HCT116 (cell line): ENCODE measurements at regions of chr17 and their contacts with region 1.

Region 1: DNA sequence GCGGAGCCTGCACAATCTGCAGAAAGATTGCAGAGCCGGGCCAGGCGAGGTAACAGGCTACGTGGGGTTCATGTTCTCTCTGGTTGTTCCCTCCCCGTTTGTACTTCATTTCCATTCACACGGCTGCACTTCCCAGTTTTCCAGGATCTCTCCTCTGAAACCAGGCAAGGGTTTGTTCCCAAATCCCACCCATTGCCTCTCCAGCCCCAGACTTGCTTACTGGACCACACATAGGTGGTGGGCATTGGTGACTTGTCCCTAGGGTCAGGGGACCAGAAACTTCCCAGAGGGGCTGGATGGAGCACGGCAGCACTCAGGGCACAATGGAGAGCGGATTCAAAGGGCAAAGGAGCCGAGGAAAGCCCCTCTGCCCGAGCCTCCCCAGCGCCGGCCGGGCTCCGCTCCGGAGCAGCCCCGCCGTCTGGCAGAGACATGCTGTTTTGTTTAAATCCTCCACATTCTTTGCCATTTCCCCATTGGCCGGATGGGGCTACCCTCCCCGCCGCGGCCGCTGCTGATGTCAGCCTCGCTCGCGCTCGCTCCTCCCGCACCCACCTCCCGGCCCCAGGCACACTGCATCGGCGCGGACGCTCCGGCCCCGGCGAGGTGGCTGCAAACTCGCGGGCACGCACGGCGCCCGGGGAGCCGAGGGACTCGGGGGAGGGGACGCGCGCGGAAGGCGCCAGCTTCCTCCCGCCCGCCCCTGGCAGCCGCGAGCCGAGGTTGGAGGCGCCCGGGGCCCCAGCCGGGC is at the start of gene PITPNC1:
- DNase-seq: peak; percentile 68
- ATAC-seq: peak; percentile 67
- H3K4me3 ChIP-seq: peak within 1 kb of the TSS; percentile 66 to 89
- H3K27ac ChIP-seq: peak within 1 kb of the TSS; percentile 73
- H3K4me1 ChIP-seq: peaks cover 26 to 49% of the 10 kb centered on the region in 2 experiments
- H3K27me3 ChIP-seq: no peaks in the 10 kb centered on the region
- CTCF ChIP-seq: no peak
- POLR2A ChIP-seq: peak; percentile 55
- RAD21 ChIP-seq: no peak
- total RNA-seq, gene PITPNC1: 41.9 TPM

Region 2: GRCh38 chr17:67116045-67116719 is 260.7 kb before region 1 on chr17:
- CTCF ChIA-PET with region 1: no interaction called
- POLR2A ChIA-PET with region 1: no interaction called
- RAD21 ChIA-PET with region 1: no interaction called
- intact Hi-C with region 1: no loop called
- DNase-seq: no peak
- ATAC-seq: no peak
- H3K4me3 ChIP-seq: no peak overlapping the region
- H3K27ac ChIP-seq: no peak overlapping the region
- H3K4me1 ChIP-seq: no peaks in the 10 kb centered on the region
- H3K27me3 ChIP-seq: no peaks in the 10 kb centered on the region
- CTCF ChIP-seq: peak; percentile 18 to 53 (median 19); a peak in 3 of 6 replicates
- POLR2A ChIP-seq: no peak
- RAD21 ChIP-seq: no peak

Region 3: GRCh38 chr17:67359960-67360773 is 16.7 kb before region 1 on chr17:
- CTCF ChIA-PET with region 1: interaction called, 11 read pairs
- POLR2A ChIA-PET with region 1: interaction called, 6 read pairs
- RAD21 ChIA-PET with region 1: no interaction called
- intact Hi-C with region 1: no loop called
- DNase-seq: peak; percentile 46
- ATAC-seq: peak; percentile 89
- H3K4me3 ChIP-seq: no peak overlapping the region
- H3K27ac ChIP-seq: no peak overlapping the region
- H3K4me1 ChIP-seq: peaks cover 7 to 10% of the 10 kb centered on the region in 2 experiments; a peak in 3 of 4 replicates
- H3K27me3 ChIP-seq: no peaks in the 10 kb centered on the region
- CTCF ChIP-seq: peak; percentile 41 to 75 (median 65); a peak in 5 of 6 replicates
- POLR2A ChIP-seq: no peak
- RAD21 ChIP-seq: peak; percentile 47; the same call in 1 of the 2 replicates

Region 4: DNA sequence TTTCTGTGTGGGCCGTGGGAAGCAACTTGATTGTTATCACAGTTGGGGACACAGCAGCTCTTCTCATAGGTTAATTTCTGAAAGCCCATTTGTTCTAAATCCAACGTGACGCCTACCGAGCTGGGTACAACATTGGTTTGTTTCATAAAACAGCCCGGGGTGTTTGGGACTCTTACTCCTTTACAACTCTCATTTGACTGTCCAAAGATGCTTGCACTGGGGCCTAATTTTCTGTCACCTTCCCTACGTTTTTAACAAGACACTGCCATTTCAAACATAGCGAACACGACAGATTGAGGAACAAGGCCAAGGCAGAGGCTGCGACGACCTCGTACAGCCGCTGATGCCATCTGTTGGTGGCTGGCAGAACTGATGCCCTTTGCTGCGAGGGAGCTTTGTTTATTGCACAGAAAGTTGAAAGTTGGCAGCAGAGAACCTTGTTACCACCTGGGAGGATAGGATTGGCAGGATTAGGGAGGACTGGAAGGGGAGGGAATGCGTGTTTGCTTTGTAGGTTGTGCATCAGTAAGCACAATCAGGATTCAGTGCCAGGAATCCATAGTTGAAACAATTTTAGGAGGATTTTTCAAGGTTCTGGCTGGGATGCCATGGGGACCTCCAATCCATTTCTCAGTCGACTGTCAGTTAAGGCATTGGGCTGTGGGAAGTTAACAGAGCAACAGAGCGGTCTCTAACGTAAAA is 98.5 kb after region 1 on chr17:
- CTCF ChIA-PET with region 1: interaction called, 41 read pairs
- POLR2A ChIA-PET with region 1: interaction called, 8 read pairs
- RAD21 ChIA-PET with region 1: interaction called, 5 to 6 read pairs
- intact Hi-C with region 1: loop called (anchors 1 kb)
- DNase-seq: peak; percentile 75
- ATAC-seq: peak; percentile 91
- H3K4me3 ChIP-seq: no peak overlapping the region
- H3K27ac ChIP-seq: no peak overlapping the region
- H3K4me1 ChIP-seq: peaks cover 13 to 49% of the 10 kb centered on the region in 2 experiments
- H3K27me3 ChIP-seq: no peaks in the 10 kb centered on the region
- CTCF ChIP-seq: peak; percentile 97 to 100 (median 100)
- POLR2A ChIP-seq: no peak
- RAD21 ChIP-seq: peak; percentile 98

Region 5: DNA sequence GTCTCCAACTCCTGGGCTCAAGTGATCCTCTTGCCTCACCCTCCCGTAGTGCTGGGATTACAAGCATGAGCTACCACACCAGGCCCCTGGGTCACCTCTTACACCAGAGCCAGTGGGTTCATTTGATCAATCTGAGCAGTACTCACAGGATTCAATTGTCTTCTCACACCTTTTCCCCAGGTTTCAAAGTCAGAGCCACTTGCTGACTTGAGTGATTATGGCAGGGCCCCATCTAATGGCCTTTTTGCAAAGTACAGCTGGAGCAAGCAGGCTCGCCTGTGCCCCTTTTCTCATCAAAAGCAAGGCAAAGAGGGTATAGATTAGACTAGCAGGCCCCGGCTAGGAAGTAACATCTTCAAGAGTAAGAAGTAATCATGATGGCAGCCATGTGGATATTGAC is 226.0 kb after region 1 on chr17:
- CTCF ChIA-PET with region 1: interaction called, 41 read pairs
- POLR2A ChIA-PET with region 1: interaction called, 3 read pairs
- RAD21 ChIA-PET with region 1: interaction called, 3 to 7 read pairs
- intact Hi-C with region 1: loop called (anchors 1 kb)
- DNase-seq: peak; percentile 56
- ATAC-seq: peak; percentile 93
- H3K4me3 ChIP-seq: no peak overlapping the region
- H3K27ac ChIP-seq: no peak overlapping the region
- H3K4me1 ChIP-seq: no peaks in the 10 kb centered on the region; a peak in 2 of 4 replicates
- H3K27me3 ChIP-seq: no peaks in the 10 kb centered on the region
- CTCF ChIP-seq: peak; percentile 77 to 94 (median 83)
- POLR2A ChIP-seq: no peak
- RAD21 ChIP-seq: peak; percentile 97

Region 6: GRCh38 chr17:67689534-67690177 is 312.7 kb after region 1 on chr17:
- CTCF ChIA-PET with region 1: interaction called, 15 read pairs
- POLR2A ChIA-PET with region 1: no interaction called
- RAD21 ChIA-PET with region 1: interaction called in 1 of 2 experiments, 4 read pairs
- intact Hi-C with region 1: loop called (anchors 1 kb)
- DNase-seq: peak; percentile 57
- ATAC-seq: peak; percentile 80
- H3K4me3 ChIP-seq: no peak overlapping the region
- H3K27ac ChIP-seq: no peak overlapping the region
- H3K4me1 ChIP-seq: no peaks in the 10 kb centered on the region
- H3K27me3 ChIP-seq: no peaks in the 10 kb centered on the region
- CTCF ChIP-seq: peak; percentile 76 to 96 (median 92)
- POLR2A ChIP-seq: no peak
- RAD21 ChIP-seq: peak; percentile 85

Region 7: GRCh38 chr17:67824735-67825626 is 448.1 kb after region 1 on chr17 and contains the start of gene BPTF:
- CTCF ChIA-PET with region 1: no interaction called
- POLR2A ChIA-PET with region 1: no interaction called
- RAD21 ChIA-PET with region 1: no interaction called
- intact Hi-C with region 1: loop called (anchors 5 kb)
- DNase-seq: peak; percentile 87
- ATAC-seq: peak; percentile 91
- H3K4me3 ChIP-seq: peak within 1 kb of the TSS; percentile 62 to 78
- H3K27ac ChIP-seq: peak within 1 kb of the TSS; percentile 74
- H3K4me1 ChIP-seq: peaks cover 16 to 19% of the 10 kb centered on the region in 2 experiments
- H3K27me3 ChIP-seq: no peaks in the 10 kb centered on the region
- CTCF ChIP-seq: peak; percentile 67 to 93 (median 90)
- POLR2A ChIP-seq: peak; percentile 56
- RAD21 ChIP-seq: peak; percentile 58
- total RNA-seq, gene BPTF: 114 TPM